HEK293 (cell line): ENCODE measurements at regions of chr5 and their contacts with region 1.

Region 1: GRCh38 chr5:59007460-59008063 is 424.7 kb downstream of the RAB3C start:
- H3K4me3 ChIP-seq: no peak overlapping the region
- H3K27ac ChIP-seq: no peak overlapping the region
- H3K4me1 ChIP-seq: no peaks in the 10 kb centered on the region
- CTCF ChIP-seq: no peak

Region 2: DNA sequence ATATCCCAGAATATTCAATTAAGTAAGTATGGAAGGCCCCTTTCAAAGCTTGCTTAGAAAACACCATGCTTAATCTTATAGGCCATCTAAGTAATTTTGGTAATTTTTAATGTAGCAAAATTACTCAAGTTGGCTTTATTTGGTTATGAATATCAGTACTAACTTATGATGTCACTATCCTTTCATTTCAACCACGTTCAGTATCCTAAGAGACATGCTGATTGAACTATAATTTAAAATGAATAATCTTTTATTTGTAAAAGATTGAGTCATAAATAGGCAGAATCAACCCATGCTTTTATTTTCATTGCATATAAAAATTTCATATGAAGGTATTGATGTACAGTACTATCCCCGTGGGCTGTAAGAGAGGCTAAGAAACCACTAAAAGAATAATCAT is 37.8 kb before region 1 on chr5:
- CTCF ChIA-PET with region 1: no interaction called
- POLR2A ChIA-PET with region 1: no interaction called
- H3K4me3 ChIP-seq: no peak overlapping the region
- H3K27ac ChIP-seq: no peak overlapping the region
- H3K4me1 ChIP-seq: peaks cover 8% of the 10 kb centered on the region; the same call in 1 of the 2 replicates
- CTCF ChIP-seq: no peak

Region 3: DNA sequence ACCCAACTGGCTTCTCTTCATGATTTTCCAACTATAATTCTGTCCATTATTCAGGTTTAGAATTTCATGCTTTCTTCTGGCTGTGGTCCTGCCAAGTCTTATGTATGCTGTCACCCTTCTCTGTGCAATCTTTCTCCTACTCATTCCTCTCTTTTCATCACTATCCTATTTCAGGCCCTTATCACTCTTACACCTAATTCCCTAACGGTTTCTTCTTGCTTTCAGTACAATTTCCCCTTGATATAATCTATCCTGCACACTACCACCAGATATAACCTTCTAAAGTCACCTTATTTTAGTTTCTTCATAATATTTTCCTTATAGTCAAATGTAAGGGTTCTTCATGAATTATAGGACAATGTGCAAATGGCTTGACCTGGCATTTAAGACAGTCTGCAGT is 11.5 kb after region 1 on chr5:
- CTCF ChIA-PET with region 1: interaction called, 13 read pairs
- POLR2A ChIA-PET with region 1: interaction called, 3 read pairs
- H3K4me3 ChIP-seq: no peak overlapping the region
- H3K27ac ChIP-seq: no peak overlapping the region
- H3K4me1 ChIP-seq: peaks cover 28% of the 10 kb centered on the region
- CTCF ChIP-seq: no peak